ENCODE measurements at regions of chr3 and their contacts with region 1.

Region 1: DNA sequence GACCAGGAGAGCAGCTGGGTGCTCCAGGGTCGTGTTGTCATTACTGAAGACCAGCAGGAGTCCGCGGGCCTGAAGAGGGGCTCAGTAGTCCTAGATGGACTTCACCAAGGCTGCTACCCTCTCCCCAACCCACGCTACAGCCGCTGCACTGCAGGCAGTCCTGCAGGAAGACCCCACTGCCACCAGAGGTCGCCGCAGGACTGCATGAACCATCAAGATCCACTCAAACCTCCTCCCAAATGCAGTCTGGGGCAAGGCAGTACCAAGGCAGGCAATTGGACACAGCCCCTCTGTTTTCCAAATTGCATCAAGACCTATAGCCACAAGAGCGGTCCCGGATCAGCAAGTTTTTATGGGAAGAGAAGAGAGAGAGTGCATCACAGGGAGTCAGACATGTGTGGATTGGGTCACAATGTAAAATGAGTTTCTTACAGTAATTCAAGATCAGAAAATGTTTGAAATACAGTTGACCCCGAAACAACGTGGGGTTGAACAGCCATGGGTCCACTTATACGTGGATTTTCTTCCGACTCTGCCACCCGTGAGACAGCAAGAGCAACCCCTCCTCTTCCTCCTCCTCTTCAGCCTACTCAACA is 46.7 kb downstream of the DZIP1L start:
- DNase-seq: peak; percentile 80 to 91
- H3K4me3 ChIP-seq: no peak overlapping the region
- H3K27ac ChIP-seq: no peak overlapping the region
- H3K4me1 ChIP-seq: peaks cover 0 to 3% (median 0%) of the 10 kb centered on the region in 4 donors
- H3K27me3 ChIP-seq: no peaks in the 10 kb centered on the region
- CTCF ChIP-seq: peak in 6 of 7 experiments; percentile 67 to 98 (median 96)
- EP300 ChIP-seq: no peak
- POLR2A ChIP-seq: no peak

Region 2: DNA sequence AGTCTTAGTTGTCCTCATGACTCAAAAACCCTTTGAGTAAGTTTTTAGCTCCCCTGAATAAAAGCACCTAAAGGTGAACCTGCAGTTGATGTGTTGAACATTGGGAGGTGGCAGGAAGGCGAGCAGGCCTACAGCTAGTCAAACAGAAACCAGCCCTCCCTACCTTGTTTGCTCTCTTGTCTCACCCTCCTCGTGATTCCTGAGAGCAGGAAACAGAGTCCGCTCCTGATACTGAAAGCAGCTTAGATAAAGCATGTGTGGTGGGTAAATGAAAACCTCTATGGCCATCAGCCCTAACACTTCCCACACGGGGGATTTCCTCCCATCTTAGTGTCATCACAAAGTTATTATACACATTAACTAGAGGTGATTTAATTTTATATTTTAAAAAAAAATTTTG is 80.5 kb before region 1 on chr3:
- intact Hi-C with region 1: no loop called
- DNase-seq: peak; percentile 77 to 91
- H3K4me3 ChIP-seq: no peak overlapping the region
- H3K27ac ChIP-seq: peak overlapping the region; percentile 80 to 90 (median 86)
- H3K4me1 ChIP-seq: peaks cover 0 to 4% (median 0%) of the 10 kb centered on the region in 4 donors
- H3K27me3 ChIP-seq: no peaks in the 10 kb centered on the region
- CTCF ChIP-seq: no peak
- EP300 ChIP-seq: no peak
- POLR2A ChIP-seq: no peak

Region 3: DNA sequence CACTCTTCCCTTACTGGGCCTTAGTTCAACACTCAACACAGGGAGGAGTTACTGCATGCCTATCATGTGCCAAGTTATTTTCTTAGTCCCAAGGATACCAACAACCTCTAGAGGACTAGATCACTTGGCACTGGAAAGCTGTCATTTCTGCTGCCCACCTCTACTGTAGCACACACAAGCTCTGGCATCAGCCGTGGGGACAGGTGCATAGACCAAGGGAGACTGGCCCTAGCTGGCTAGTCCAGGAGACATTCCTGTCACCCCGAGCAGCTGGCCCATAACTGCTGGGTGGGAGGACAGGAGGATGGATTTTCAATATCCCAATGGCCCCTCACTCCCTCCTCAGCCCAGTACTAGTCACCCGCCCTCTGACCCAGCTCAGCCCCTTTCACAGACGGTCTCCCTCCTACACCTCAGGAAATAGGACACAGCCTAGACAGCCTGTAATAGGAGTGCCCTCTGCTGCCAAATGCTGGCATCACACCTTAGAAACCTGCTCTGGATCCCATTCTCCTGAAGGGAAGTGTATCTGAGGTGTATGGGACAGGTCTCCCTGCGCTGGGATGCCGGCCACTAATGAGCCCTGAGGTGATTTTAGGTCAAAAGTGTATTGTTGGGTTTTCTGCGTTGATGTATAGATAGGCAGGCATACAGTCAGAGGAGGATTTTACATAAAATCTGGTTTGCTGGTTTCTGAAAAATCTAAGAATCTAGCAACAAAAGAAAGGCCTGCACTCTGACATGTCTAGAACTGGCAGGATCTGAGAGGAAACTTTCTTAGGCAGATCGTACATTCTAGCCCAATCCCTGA is 50.1 kb after region 1 on chr3:
- intact Hi-C with region 1: loop called (anchors 5 kb)
- DNase-seq: peak; percentile 83 to 88
- H3K4me3 ChIP-seq: no peak overlapping the region
- H3K27ac ChIP-seq: peak overlapping the region in 1 of 5 donors; percentile 27
- H3K4me1 ChIP-seq: peaks cover 7 to 40% (median 24%) of the 10 kb centered on the region in 4 donors
- H3K27me3 ChIP-seq: peaks cover 0 to 8% (median 0%) of the 10 kb centered on the region in 3 donors
- CTCF ChIP-seq: peak in 5 of 7 experiments; percentile 61 to 83 (median 74)
- EP300 ChIP-seq: no peak
- POLR2A ChIP-seq: no peak

Region 4: DNA sequence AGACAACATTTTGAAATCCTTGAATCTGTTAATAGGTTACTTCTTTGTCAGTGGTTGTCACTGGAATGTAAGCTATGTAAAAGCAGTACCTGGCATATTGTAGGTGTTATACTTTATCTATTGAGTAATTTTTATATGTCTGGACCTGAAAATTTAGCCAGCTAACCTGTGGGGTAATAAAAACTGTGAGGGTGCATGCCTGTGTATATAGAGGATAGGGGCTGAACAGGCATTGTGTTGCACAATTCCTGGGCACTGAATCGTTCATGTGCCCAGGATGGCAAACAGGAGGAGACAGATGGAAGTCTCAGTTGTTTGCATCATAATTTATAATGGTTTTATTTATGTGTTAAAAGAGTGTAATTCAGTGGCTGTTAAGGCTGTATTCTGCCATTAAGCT is 185.5 kb after region 1 on chr3:
- intact Hi-C with region 1: loop called (anchors 5 kb)
- DNase-seq: no peak
- H3K4me3 ChIP-seq: no peak overlapping the region
- H3K27ac ChIP-seq: no peak overlapping the region
- H3K4me1 ChIP-seq: no peaks in the 10 kb centered on the region
- H3K27me3 ChIP-seq: no peaks in the 10 kb centered on the region
- CTCF ChIP-seq: no peak
- EP300 ChIP-seq: no peak
- POLR2A ChIP-seq: no peak